MCF 10A (cell line): ENCODE measurements at regions of chr1 and their contacts with region 1.

Region 1: DNA sequence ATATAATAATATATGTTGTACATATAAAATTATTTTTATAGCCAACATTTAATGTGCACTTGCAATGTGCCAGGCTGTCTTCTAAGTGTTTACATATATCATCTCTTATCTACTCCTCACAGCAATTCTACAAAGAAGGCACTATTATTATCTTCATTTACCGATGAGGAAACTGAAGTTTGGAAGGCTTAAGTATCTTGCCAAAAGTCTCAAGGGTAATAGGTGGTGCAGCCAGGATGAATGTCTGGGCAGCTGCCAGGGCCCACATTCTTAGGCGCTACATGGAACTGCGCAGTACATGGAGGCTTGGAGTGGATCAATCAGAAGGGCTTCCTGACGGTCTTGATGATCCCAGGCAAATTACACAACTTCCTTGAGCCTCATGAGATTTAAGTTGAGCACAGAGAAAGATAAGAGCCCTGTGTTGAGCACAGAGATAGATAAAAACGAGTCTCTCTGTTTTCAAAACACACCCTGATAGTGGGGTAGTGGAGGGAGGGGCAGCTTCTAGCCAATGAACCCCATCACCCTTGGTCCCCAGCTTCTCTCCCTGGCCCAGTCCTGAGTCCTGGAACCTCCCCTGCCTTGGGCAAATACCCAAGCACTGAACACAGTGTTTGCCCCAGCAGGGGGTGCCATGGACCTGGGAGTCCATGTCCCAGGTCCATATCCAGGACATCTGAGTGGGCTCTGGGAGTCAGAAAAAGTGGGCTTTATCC is 9.2 kb downstream of the POU3F1 start:
- DNase-seq: peak; percentile 43
- H3K4me3 Mint-ChIP-seq: no peak overlapping the region
- H3K27ac Mint-ChIP-seq: no peak overlapping the region
- H3K4me1 Mint-ChIP-seq: peaks cover 6% of the 10 kb centered on the region
- H3K27me3 Mint-ChIP-seq: peaks cover 7% of the 10 kb centered on the region
- CTCF ChIP-seq: no peak

Region 2: DNA sequence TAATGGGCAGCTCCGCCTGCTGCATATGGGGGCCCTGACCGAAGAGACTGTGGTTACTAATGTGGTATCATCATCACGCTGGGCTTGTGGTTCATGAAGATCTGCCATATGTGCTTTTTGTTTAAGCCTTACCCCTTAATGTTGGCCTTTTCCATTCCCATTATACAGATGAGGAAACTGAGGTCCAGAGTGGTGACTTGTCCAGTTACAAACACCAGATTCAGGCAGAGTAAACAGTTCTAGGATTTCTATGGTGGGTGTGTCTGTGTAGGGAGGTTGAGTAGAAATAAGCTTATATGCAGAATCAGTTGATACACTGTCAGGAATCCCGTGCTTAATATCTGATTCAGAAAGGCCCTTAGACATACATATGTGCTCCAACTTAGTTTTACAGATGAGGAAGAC is 24.2 kb before region 1 on chr1:
- CTCF ChIA-PET with region 1: no interaction called
- POLR2A ChIA-PET with region 1: no interaction called
- intact Hi-C with region 1: no loop called
- DNase-seq: no peak
- H3K4me3 Mint-ChIP-seq: peak overlapping the region; percentile 97
- H3K27ac Mint-ChIP-seq: peak overlapping the region; percentile 99
- H3K4me1 Mint-ChIP-seq: peaks cover 20% of the 10 kb centered on the region
- H3K27me3 Mint-ChIP-seq: no peaks in the 10 kb centered on the region
- CTCF ChIP-seq: no peak

Region 3: GRCh38 chr1:38586993-38587646 is 549.7 kb after region 1 on chr1:
- CTCF ChIA-PET with region 1: no interaction called
- POLR2A ChIA-PET with region 1: no interaction called
- intact Hi-C with region 1: loop called (anchors 5 kb)
- DNase-seq: peak; percentile 53
- H3K4me3 Mint-ChIP-seq: no peak overlapping the region
- H3K27ac Mint-ChIP-seq: no peak overlapping the region
- H3K4me1 Mint-ChIP-seq: peaks cover 9% of the 10 kb centered on the region
- H3K27me3 Mint-ChIP-seq: peaks cover 13% of the 10 kb centered on the region
- CTCF ChIP-seq: peak; percentile 64

Region 4: DNA sequence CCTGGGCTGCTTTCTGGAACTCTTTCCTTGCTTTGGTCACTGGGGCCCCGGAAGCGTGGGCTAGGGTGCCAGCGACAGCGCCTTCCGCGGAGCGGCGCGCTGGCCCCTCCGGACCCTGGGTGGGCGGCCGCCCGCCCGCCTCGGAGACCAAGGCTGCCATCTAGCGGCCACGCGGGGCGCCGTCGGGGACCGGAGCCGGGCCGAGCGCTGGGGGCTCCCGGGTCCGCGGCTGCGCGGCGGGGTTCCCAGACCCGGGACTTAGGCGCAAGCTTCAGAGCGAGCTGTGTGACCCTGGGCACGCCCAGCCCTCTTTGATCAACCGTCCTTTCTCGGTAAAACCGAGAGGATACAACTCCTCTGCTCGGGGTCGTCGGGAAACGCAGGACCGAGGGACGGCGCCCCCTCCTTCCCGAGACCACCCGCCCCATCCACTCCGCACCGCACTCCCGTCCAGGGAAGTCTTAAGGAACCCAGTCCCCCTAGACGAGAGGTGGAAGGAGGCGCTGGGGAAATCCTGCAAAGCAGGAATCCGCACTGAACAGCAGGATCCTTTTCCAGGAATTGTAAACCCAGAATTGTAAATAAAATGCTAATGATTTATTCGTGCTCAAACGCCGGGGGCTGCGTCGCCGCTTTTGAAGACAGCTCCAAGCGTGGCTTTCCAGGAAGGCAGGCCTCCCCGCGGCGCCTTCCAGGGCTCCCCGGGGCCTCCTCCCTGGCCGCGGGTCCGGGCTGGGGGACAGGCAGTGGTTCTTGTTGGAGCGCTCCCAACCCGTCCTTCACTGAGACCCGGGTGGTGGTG is 781.0 kb after region 1 on chr1:
- CTCF ChIA-PET with region 1: interaction called, 13 read pairs
- POLR2A ChIA-PET with region 1: no interaction called
- intact Hi-C with region 1: no loop called
- DNase-seq: no peak
- H3K4me3 Mint-ChIP-seq: no peak overlapping the region
- H3K27ac Mint-ChIP-seq: no peak overlapping the region
- H3K4me1 Mint-ChIP-seq: no peaks in the 10 kb centered on the region
- H3K27me3 Mint-ChIP-seq: peaks cover 11% of the 10 kb centered on the region
- CTCF ChIP-seq: peak; percentile 61

Region 5: DNA sequence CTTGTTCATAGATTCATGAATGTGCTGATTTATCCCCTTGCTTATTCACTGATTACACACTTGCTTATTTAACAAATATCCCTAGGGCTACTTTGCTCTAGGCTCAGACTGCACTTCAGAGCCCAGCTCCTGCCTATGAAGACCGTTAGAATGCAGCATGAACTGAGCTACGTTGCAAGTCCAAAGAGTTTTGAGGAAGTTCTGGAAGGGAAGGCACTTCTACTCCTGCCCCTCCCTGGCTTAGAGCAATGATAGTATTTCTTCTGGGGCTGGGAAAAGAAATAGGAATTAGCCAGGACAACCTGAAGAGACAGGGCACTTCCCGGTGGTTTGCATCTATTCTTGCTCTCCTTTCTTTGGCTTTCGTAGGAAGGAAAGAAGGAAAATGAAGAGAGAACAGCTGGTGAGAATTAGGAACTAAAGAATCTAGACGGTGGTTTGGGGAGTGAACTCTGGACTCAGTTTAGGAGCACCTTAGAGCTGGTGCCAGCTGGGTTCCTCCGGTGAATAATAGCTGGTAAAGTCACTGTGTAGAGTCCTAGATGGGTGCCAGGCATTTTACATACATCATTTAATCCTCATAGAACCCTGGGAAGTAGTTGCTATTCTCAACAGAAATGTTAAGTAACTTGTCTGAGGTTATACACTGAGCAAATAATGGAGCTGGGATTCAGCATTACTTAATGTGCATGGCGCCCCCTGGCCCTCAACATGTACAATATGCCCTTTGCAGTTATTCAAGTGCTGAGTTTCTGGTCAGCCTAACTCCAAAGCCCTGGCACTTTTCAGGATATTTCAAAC is 1054.7 kb after region 1 on chr1:
- CTCF ChIA-PET with region 1: no interaction called
- POLR2A ChIA-PET with region 1: no interaction called
- intact Hi-C with region 1: loop called (anchors 5 kb)
- DNase-seq: peak; percentile 83
- H3K4me3 Mint-ChIP-seq: no peak overlapping the region
- H3K27ac Mint-ChIP-seq: no peak overlapping the region
- H3K4me1 Mint-ChIP-seq: no peaks in the 10 kb centered on the region
- H3K27me3 Mint-ChIP-seq: no peaks in the 10 kb centered on the region
- CTCF ChIP-seq: peak; percentile 74